ENCODE measurements at regions of chr3 and their contacts with region 1.

Region 1: GRCh38 chr3:136196401-136197158 is 445 bp upstream of the MSL2 start:
- DNase-seq: peak; percentile 94 to 99 (median 98)
- ATAC-seq: peak; percentile 73
- H3K4me3 ChIP-seq: peak overlapping the region; percentile 77
- H3K4me3 Mint-ChIP-seq: peak overlapping the region; percentile 91 to 99 (median 98)
- H3K27ac ChIP-seq: peak overlapping the region; percentile 94
- H3K27ac Mint-ChIP-seq: peak overlapping the region; percentile 96 to 100 (median 99)
- H3K4me1 ChIP-seq: peaks cover 6 to 11% of the 10 kb centered on the region in 2 donors
- H3K4me1 Mint-ChIP-seq: peaks cover 20 to 38% (median 35%) of the 10 kb centered on the region in 7 donors
- H3K27me3 ChIP-seq: no peaks in the 10 kb centered on the region
- H3K27me3 Mint-ChIP-seq: peaks cover 0 to 7% (median 0%) of the 10 kb centered on the region in 5 donors

Region 2: GRCh38 chr3:136075218-136075808 is 121.3 kb before region 1 on chr3:
- CTCF ChIA-PET with region 1: interaction called, 3 read pairs
- POLR2A ChIA-PET with region 1: interaction called, 5 read pairs
- intact Hi-C with region 1: loop called (anchors 2 kb)
- DNase-seq: peak; percentile 38 to 73 (median 65)
- ATAC-seq: peak; percentile 88
- H3K4me3 ChIP-seq: no peak overlapping the region
- H3K4me3 Mint-ChIP-seq: no peak overlapping the region
- H3K27ac ChIP-seq: no peak overlapping the region
- H3K27ac Mint-ChIP-seq: peak overlapping the region in 1 of 9 donors; percentile 28
- H3K4me1 ChIP-seq: no peaks in the 10 kb centered on the region
- H3K4me1 Mint-ChIP-seq: peaks cover 0 to 5% (median 4%) of the 10 kb centered on the region in 7 donors
- H3K27me3 ChIP-seq: no peaks in the 10 kb centered on the region
- H3K27me3 Mint-ChIP-seq: peaks cover 0 to 6% (median 0%) of the 10 kb centered on the region in 5 donors

Region 3: DNA sequence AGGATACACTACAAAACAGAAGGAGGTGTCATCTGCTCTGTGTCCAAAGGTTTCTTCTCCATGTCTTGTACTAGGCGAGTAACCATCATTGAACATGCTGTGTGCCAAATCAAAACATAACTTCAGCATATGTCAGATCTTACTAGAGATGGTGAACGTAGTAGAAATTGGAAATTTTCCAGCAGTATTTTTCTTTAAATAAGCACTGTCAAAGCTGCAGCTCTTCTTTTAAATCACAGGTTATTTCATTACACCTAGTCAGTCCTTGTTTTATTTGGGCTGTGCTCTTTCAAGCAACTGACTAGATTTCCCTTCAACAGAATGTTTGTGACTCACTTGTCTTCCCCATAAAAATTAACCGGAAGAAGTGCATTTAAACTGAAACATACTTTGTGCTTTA is 46.9 kb before region 1 on chr3:
- CTCF ChIA-PET with region 1: interaction called, 4 read pairs
- POLR2A ChIA-PET with region 1: interaction called, 4 read pairs
- intact Hi-C with region 1: loop called (anchors 5 to 10 kb)
- DNase-seq: no peak
- ATAC-seq: no peak
- H3K4me3 ChIP-seq: no peak overlapping the region
- H3K4me3 Mint-ChIP-seq: peak overlapping the region in 1 of 10 donors; percentile 16
- H3K27ac ChIP-seq: no peak overlapping the region
- H3K27ac Mint-ChIP-seq: peak overlapping the region in 7 of 9 donors; percentile 1 to 78 (median 44)
- H3K4me1 ChIP-seq: peaks cover 0 to 14% of the 10 kb centered on the region in 2 donors
- H3K4me1 Mint-ChIP-seq: peaks cover 24 to 72% (median 61%) of the 10 kb centered on the region in 7 donors
- H3K27me3 ChIP-seq: no peaks in the 10 kb centered on the region
- H3K27me3 Mint-ChIP-seq: no peaks in the 10 kb centered on the region

Region 4: DNA sequence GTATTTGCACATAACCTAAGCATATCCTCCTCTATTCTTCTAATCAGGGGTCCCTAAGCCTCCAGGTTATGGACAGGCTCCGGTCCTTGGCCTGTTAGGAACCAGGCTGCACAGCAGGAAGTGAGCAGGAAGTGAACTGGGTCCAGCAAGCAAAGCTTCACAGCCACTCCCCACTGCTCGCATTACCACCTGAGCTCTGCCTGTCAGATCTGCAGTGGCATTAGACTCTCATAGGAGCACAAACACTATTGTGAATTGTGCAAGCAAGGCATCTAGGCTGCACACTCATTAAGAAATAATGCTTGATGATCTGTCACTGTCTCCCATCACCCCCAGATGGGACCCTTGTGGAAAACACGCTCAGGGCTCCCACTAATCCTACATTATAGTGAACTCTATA is 10.2 kb before region 1 on chr3:
- CTCF ChIA-PET with region 1: interaction called, 3 read pairs
- POLR2A ChIA-PET with region 1: interaction called, 24 read pairs
- intact Hi-C with region 1: loop called in 1 of 2 experiments (anchors 1 kb)
- DNase-seq: peak in 1 of 9 donors; percentile 25
- ATAC-seq: peak; percentile 60
- H3K4me3 ChIP-seq: peak overlapping the region; percentile 22
- H3K4me3 Mint-ChIP-seq: peak overlapping the region; percentile 7 to 98 (median 80)
- H3K27ac ChIP-seq: peak overlapping the region; percentile 10
- H3K27ac Mint-ChIP-seq: peak overlapping the region in 8 of 9 donors; percentile 2 to 85 (median 52)
- H3K4me1 ChIP-seq: peaks cover 62 to 63% of the 10 kb centered on the region in 2 donors
- H3K4me1 Mint-ChIP-seq: peaks cover 63 to 97% (median 90%) of the 10 kb centered on the region in 7 donors
- H3K27me3 ChIP-seq: no peaks in the 10 kb centered on the region
- H3K27me3 Mint-ChIP-seq: no peaks in the 10 kb centered on the region

Region 5: GRCh38 chr3:136250226-136250902 is 53.8 kb after region 1 on chr3 and contains the start of gene PCCB:
- CTCF ChIA-PET with region 1: interaction called, 8 read pairs
- POLR2A ChIA-PET with region 1: interaction called, 78 read pairs
- intact Hi-C with region 1: loop called (anchors 1 kb)
- DNase-seq: peak; percentile 86 to 95 (median 93)
- ATAC-seq: peak; percentile 99
- H3K4me3 ChIP-seq: peak within 1 kb of the TSS; percentile 80
- H3K4me3 Mint-ChIP-seq: peak within 1 kb of the TSS; percentile 79 to 94 (median 90)
- H3K27ac ChIP-seq: peak within 1 kb of the TSS; percentile 80
- H3K27ac Mint-ChIP-seq: peak within 1 kb of the TSS; percentile 91 to 96 (median 93)
- H3K4me1 ChIP-seq: peaks cover 9% of the 10 kb centered on the region in 2 donors
- H3K4me1 Mint-ChIP-seq: peaks cover 12 to 30% (median 21%) of the 10 kb centered on the region in 7 donors
- H3K27me3 ChIP-seq: no peaks in the 10 kb centered on the region
- H3K27me3 Mint-ChIP-seq: no peaks in the 10 kb centered on the region
- total RNA-seq, gene PCCB: 13.6 to 22.6 (median 16.6) TPM

Region 6: DNA sequence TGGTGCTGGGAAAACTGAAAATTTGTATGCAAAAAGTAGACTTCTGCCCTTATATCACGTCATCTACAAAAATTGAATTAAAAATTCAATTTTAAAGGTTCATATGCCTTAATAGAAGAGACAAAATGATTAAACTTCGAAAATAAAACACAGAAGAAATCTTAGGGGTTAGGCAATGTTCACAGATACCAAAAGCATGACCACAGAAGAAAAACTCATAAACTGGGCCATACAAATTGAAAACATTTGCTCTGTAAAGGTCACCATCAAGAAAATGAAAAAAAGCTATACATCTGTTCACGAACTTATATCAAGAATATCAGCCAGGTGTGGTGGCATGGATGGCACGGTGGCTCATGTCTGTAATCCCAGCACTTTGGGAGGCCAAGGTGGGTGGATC is 298.6 kb after region 1 on chr3:
- CTCF ChIA-PET with region 1: no interaction called
- POLR2A ChIA-PET with region 1: no interaction called
- intact Hi-C with region 1: no loop called
- DNase-seq: no peak
- ATAC-seq: no peak
- H3K4me3 ChIP-seq: no peak overlapping the region
- H3K4me3 Mint-ChIP-seq: no peak overlapping the region
- H3K27ac ChIP-seq: no peak overlapping the region
- H3K27ac Mint-ChIP-seq: no peak overlapping the region
- H3K4me1 ChIP-seq: no peaks in the 10 kb centered on the region
- H3K4me1 Mint-ChIP-seq: peaks cover 0 to 3% (median 0%) of the 10 kb centered on the region in 7 donors
- H3K27me3 ChIP-seq: no peaks in the 10 kb centered on the region
- H3K27me3 Mint-ChIP-seq: no peaks in the 10 kb centered on the region

Region 7: GRCh38 chr3:137013955-137014688 is 817.5 kb after region 1 on chr3:
- CTCF ChIA-PET with region 1: interaction called, 5 read pairs
- POLR2A ChIA-PET with region 1: interaction called, 4 read pairs
- intact Hi-C with region 1: loop called (anchors 5 to 10 kb)
- DNase-seq: peak; percentile 59 to 87 (median 78)
- ATAC-seq: peak; percentile 93
- H3K4me3 ChIP-seq: peak overlapping the region; percentile 43
- H3K4me3 Mint-ChIP-seq: peak overlapping the region; percentile 65 to 87 (median 80)
- H3K27ac ChIP-seq: no peak overlapping the region
- H3K27ac Mint-ChIP-seq: peak overlapping the region in 4 of 9 donors; percentile 24 to 64 (median 57)
- H3K4me1 ChIP-seq: no peaks in the 10 kb centered on the region
- H3K4me1 Mint-ChIP-seq: peaks cover 5 to 10% (median 9%) of the 10 kb centered on the region in 7 donors
- H3K27me3 ChIP-seq: no peaks in the 10 kb centered on the region
- H3K27me3 Mint-ChIP-seq: peaks cover 0 to 4% (median 0%) of the 10 kb centered on the region in 5 donors